CD4-positive, alpha-beta T cell (primary cell): ENCODE measurements at regions of chr12 and their contacts with region 1.

Region 1: GRCh38 chr12:47935184-47935583 is 28.2 kb upstream of the TMEM106C start:
- DNase-seq: no peak
- ATAC-seq: no peak
- H3K4me3 ChIP-seq: no peak overlapping the region
- H3K4me3 Mint-ChIP-seq: no peak overlapping the region
- H3K27ac ChIP-seq: no peak overlapping the region
- H3K27ac Mint-ChIP-seq: no peak overlapping the region
- H3K4me1 ChIP-seq: no peaks in the 10 kb centered on the region
- H3K4me1 Mint-ChIP-seq: no peaks in the 10 kb centered on the region
- H3K27me3 ChIP-seq: no peaks in the 10 kb centered on the region
- H3K27me3 Mint-ChIP-seq: peaks cover 3% of the 10 kb centered on the region
- CTCF ChIP-seq: no peak

Region 2: DNA sequence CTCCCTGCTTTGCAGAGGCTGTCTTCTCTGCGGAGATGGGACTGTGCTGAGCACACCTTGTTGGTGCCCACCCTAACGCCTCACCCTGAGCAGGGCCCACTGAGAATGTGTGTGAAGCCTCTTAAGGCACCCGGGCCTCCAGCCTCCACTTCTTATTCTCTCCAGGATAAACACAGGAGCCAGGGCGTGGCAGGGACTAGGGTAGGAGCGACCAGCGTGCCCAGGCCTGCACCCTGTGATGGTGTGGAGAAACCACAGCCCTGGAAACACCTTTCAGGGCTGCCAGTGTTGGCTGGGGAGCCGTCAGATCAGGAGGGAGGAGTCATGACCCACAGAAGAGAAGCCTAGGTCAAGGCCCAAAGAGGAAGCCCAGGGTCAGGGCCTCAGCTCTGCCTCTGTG is 71.7 kb before region 1 on chr12:
- CTCF ChIA-PET with region 1: no interaction called
- POLR2A ChIA-PET with region 1: no interaction called
- intact Hi-C with region 1: loop called in 1 of 2 experiments (anchors 5 kb)
- DNase-seq: no peak
- ATAC-seq: no peak
- H3K4me3 ChIP-seq: no peak overlapping the region
- H3K4me3 Mint-ChIP-seq: no peak overlapping the region
- H3K27ac ChIP-seq: no peak overlapping the region
- H3K27ac Mint-ChIP-seq: no peak overlapping the region
- H3K4me1 ChIP-seq: no peaks in the 10 kb centered on the region
- H3K4me1 Mint-ChIP-seq: peaks cover 5% of the 10 kb centered on the region
- H3K27me3 ChIP-seq: no peaks in the 10 kb centered on the region
- H3K27me3 Mint-ChIP-seq: no peaks in the 10 kb centered on the region
- CTCF ChIP-seq: no peak

Region 3: DNA sequence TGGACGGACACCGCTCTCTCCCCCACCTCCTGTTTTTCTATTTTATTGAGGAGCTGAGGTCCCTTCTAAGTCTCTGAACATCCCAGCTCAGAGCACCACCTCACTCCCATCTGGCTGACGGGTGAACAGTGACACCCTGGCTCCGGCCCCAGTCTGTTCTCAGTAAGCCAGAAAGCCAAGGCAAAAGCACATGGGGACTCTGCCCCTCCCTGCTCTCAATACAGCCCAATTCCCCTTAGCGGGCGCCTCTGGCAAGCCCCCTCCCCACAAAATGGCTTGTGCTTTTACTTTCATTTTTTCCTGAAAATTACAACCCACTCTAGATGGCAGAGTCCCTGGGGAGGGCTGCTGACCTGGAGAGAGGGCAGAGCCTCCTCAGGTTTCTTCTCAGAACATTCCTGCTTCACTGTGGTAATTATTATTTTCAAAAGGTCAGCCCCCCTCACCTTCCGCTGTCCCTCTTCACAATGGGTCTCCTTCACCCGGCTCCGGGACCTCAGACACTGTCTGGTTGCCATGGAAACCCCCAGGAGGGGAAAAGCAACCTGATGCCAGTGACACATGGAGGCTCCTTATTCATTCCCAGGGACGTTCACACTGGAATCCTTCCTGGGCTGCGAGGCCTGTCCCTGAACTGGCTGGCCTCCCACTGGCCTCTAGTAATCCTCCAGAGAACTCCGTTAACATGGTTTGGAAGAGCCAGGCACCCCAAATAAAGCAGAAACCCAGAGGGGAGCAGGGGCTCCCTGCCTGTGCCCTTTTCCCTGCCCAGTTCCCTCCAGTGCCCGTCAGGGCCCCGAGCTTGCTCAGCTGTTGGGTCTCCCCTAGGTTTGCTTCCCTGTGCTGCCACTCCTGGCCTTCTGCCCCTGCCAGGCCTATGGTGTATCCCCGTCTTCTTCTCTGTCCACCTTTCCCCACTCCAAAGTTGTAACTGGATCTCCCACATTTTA is 53.2 kb after region 1 on chr12:
- CTCF ChIA-PET with region 1: no interaction called
- POLR2A ChIA-PET with region 1: no interaction called
- intact Hi-C with region 1: no loop called
- DNase-seq: no peak
- ATAC-seq: no peak
- H3K4me3 ChIP-seq: no peak overlapping the region
- H3K4me3 Mint-ChIP-seq: no peak overlapping the region
- H3K27ac ChIP-seq: no peak overlapping the region
- H3K27ac Mint-ChIP-seq: no peak overlapping the region
- H3K4me1 ChIP-seq: peaks cover 28% of the 10 kb centered on the region
- H3K4me1 Mint-ChIP-seq: peaks cover 18% of the 10 kb centered on the region
- H3K27me3 ChIP-seq: no peaks in the 10 kb centered on the region
- H3K27me3 Mint-ChIP-seq: peaks cover 3% of the 10 kb centered on the region
- CTCF ChIP-seq: no peak